ENCODE measurements at regions of chr14 and their contacts with region 1.

Region 1: GRCh38 chr14:55129428-55130195 is 560 bp downstream of the LGALS3 start:
- DNase-seq: no peak
- ATAC-seq: peak; percentile 73
- H3K4me3 ChIP-seq: peak overlapping the region; percentile 74 to 80
- H3K27ac ChIP-seq: peak overlapping the region; percentile 79
- H3K4me1 ChIP-seq: peaks cover 30 to 61% of the 10 kb centered on the region in 2 experiments
- H3K27me3 ChIP-seq: no peaks in the 10 kb centered on the region
- CTCF ChIP-seq: no peak
- POLR2A ChIP-seq: no peak
- RAD21 ChIP-seq: no peak

Region 2: DNA sequence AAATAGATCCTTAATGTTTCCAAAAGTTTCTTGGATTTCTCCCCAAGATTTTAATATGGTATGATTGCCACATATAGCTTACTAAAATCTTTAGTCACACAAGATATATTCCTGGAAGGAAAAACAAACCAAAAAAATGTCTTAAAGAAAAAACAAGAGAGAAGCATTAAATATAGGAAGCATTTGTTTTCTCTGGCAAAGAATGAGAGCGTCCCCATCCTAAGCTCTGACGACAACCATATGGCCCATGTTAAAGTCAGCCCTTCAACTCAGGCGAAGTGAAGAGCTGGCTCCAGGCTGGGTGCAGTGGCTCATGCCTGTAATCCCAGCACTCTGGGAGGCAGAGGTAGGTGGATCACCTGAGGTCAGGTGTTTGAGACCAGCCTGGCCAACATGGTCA is 262.6 kb before region 1 on chr14:
- CTCF ChIA-PET with region 1: no interaction called
- POLR2A ChIA-PET with region 1: no interaction called
- RAD21 ChIA-PET with region 1: no interaction called
- intact Hi-C with region 1: no loop called
- DNase-seq: no peak
- ATAC-seq: no peak
- H3K4me3 ChIP-seq: no peak overlapping the region
- H3K27ac ChIP-seq: no peak overlapping the region
- H3K4me1 ChIP-seq: peaks cover 11 to 22% of the 10 kb centered on the region in 2 experiments
- H3K27me3 ChIP-seq: no peaks in the 10 kb centered on the region
- CTCF ChIP-seq: no peak
- POLR2A ChIP-seq: no peak
- RAD21 ChIP-seq: no peak

Region 3: GRCh38 chr14:55102141-55102621 is 27.4 kb before region 1 on chr14:
- CTCF ChIA-PET with region 1: interaction called, 3 read pairs
- POLR2A ChIA-PET with region 1: interaction called, 17 read pairs
- RAD21 ChIA-PET with region 1: no interaction called
- intact Hi-C with region 1: loop called (anchors 2 kb)
- DNase-seq: no peak
- ATAC-seq: peak; percentile 31
- H3K4me3 ChIP-seq: peak overlapping the region; percentile 43 to 53
- H3K27ac ChIP-seq: peak overlapping the region; percentile 94
- H3K4me1 ChIP-seq: peaks cover 45 to 65% of the 10 kb centered on the region in 2 experiments
- H3K27me3 ChIP-seq: no peaks in the 10 kb centered on the region
- CTCF ChIP-seq: no peak
- POLR2A ChIP-seq: no peak
- RAD21 ChIP-seq: no peak

Region 4: GRCh38 chr14:55107766-55108554 is 21.7 kb before region 1 on chr14:
- CTCF ChIA-PET with region 1: no interaction called
- POLR2A ChIA-PET with region 1: interaction called, 17 read pairs
- RAD21 ChIA-PET with region 1: no interaction called
- intact Hi-C with region 1: loop called (anchors 2 kb)
- DNase-seq: peak; percentile 91
- ATAC-seq: peak; percentile 80
- H3K4me3 ChIP-seq: peak overlapping the region; percentile 15 to 17
- H3K27ac ChIP-seq: peak overlapping the region; percentile 97
- H3K4me1 ChIP-seq: peaks cover 49 to 62% of the 10 kb centered on the region in 2 experiments
- H3K27me3 ChIP-seq: no peaks in the 10 kb centered on the region
- CTCF ChIP-seq: no peak
- POLR2A ChIP-seq: no peak
- RAD21 ChIP-seq: no peak

Region 5: GRCh38 chr14:55301437-55302121 is 172.0 kb after region 1 on chr14:
- CTCF ChIA-PET with region 1: no interaction called
- POLR2A ChIA-PET with region 1: no interaction called
- RAD21 ChIA-PET with region 1: no interaction called
- intact Hi-C with region 1: no loop called
- DNase-seq: no peak
- ATAC-seq: peak; percentile 46; the same call in 1 of the 2 replicates
- H3K4me3 ChIP-seq: no peak overlapping the region
- H3K27ac ChIP-seq: no peak overlapping the region
- H3K4me1 ChIP-seq: peaks cover 13 to 23% of the 10 kb centered on the region in 2 experiments; a peak in 3 of 4 replicates
- H3K27me3 ChIP-seq: no peaks in the 10 kb centered on the region
- CTCF ChIP-seq: no peak
- POLR2A ChIP-seq: no peak
- RAD21 ChIP-seq: no peak

Measured in HCT116 (cell line).